A673 (cell line): ENCODE measurements at regions of chr7 and their contacts with region 1.

Region 1: GRCh38 chr7:132168239-132168638 is 408.0 kb downstream of the PLXNA4 start:
- DNase-seq: no peak
- H3K4me3 ChIP-seq: no peak overlapping the region
- H3K27ac ChIP-seq: no peak overlapping the region
- H3K4me1 ChIP-seq: no peaks in the 10 kb centered on the region
- H3K27me3 ChIP-seq: peaks cover 32% of the 10 kb centered on the region
- CTCF ChIP-seq: no peak

Region 2: GRCh38 chr7:132996581-132997242 is 828.5 kb after region 1 on chr7:
- CTCF ChIA-PET with region 1: no interaction called
- POLR2A ChIA-PET with region 1: interaction called, 11 read pairs
- intact Hi-C with region 1: no loop called
- DNase-seq: peak; percentile 42
- H3K4me3 ChIP-seq: peak overlapping the region; percentile 19
- H3K27ac ChIP-seq: no peak overlapping the region
- H3K4me1 ChIP-seq: peaks cover 38% of the 10 kb centered on the region
- H3K27me3 ChIP-seq: no peaks in the 10 kb centered on the region
- CTCF ChIP-seq: no peak